Right ventricle myocardium inferior (tissue), 1 donor: ENCODE measurements at regions of chr7 and their contacts with region 1.

Region 1: DNA sequence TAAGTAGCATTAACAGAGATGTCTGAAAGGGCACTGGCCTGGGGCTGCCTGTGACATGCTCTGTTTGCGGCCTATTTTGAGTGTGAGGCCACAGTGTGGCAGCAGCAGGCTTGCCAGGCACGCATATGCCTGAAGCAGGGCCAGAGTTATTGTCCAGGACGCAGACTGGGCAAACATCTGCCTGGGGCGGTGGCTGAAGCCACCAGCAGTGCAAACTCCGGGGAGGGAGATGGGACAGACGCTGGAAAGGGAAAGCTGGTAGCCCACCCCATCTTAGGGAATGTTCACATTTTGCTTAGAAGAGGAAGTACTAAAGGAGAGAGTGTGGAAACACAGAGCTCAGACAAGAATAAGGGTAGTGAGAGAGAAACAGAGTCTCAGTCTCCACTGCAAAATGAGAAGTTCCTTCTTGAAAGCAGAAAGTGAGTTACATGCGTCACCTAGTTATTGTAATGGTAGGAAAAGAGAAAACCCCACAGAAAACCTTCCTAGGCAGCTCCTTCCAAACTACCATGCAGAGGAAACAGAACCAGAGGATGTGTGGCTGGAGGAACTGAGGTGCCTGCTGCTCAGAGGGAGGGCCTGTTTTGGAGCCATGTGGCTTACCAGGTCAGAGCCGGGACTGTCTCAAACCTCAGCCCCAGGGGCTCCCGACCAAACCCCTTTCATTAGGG is 14.6 kb downstream of the AKR1B1 start:
- DNase-seq: no peak
- ATAC-seq: peak; percentile 86

Region 2: DNA sequence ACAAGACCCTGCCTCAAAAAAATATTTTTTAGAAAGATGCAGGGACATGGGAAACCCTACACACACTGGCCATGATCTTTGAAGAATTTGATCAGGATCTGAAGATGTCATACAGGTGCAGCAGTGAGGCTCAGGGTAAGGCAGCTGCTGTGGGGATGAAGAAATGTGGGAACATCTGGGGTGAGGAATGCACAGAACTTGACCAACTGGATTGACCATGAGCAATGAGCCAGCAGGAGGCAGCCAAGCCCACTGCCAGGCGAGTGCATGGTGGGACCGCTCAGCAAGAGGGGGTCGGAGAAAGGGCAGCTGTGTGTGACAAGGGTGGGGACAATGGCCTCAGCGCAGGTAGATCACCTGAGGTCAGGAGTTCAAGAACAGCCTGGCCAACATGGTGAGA is 40.7 kb before region 1 on chr7:
- intact Hi-C with region 1: no loop called
- DNase-seq: no peak
- ATAC-seq: no peak

Region 3: GRCh38 chr7:134491963-134492362 is 47.6 kb after region 1 on chr7:
- intact Hi-C with region 1: loop called (anchors 5 kb)
- DNase-seq: no peak
- ATAC-seq: no peak